ENCODE measurements at regions of chr21 and their contacts with region 1.

Region 1: GRCh38 chr21:33229784-33230544 is at the start of gene IFNAR2:
- DNase-seq: peak; percentile 84
- H3K4me3 ChIP-seq: peak within 1 kb of the TSS; percentile 99
- H3K27ac ChIP-seq: peak within 1 kb of the TSS; percentile 99
- H3K4me1 ChIP-seq: peaks cover 55% of the 10 kb centered on the region
- H3K27me3 ChIP-seq: no peaks in the 10 kb centered on the region
- CTCF ChIP-seq: no peak
- total RNA-seq, gene IFNAR2: 9.0 TPM

Region 2: DNA sequence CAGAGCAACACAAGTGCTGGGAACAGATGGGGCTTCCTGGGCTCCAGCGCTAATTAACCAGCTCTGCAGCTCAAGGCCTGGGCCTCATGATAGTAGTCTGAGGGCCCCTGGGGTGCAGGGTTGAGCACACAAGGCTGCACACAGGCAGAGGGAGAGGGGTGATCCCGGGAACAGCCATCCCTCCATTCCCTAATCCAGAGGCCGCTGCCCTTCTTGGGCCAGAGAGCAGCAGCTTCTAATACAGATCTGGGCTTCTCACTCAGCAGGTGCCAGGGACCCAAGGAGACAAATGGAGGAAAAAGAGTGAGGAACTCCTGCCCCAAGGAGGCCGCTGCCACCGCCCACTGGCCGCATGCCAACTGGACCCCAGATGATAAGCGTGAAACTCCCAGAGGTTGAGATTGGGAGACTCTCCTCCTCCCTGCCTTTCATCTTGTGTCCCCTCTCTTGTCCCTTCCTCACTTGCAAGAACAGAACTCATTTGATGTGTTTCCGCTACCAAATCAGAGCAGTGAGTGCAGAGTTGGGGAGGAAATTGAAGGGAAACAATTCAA is 58.3 kb before region 1 on chr21:
- intact Hi-C with region 1: no loop called
- DNase-seq: no peak
- H3K4me3 ChIP-seq: no peak overlapping the region
- H3K27ac ChIP-seq: no peak overlapping the region
- H3K4me1 ChIP-seq: no peaks in the 10 kb centered on the region
- H3K27me3 ChIP-seq: peaks cover 51% of the 10 kb centered on the region
- CTCF ChIP-seq: no peak

Region 3: DNA sequence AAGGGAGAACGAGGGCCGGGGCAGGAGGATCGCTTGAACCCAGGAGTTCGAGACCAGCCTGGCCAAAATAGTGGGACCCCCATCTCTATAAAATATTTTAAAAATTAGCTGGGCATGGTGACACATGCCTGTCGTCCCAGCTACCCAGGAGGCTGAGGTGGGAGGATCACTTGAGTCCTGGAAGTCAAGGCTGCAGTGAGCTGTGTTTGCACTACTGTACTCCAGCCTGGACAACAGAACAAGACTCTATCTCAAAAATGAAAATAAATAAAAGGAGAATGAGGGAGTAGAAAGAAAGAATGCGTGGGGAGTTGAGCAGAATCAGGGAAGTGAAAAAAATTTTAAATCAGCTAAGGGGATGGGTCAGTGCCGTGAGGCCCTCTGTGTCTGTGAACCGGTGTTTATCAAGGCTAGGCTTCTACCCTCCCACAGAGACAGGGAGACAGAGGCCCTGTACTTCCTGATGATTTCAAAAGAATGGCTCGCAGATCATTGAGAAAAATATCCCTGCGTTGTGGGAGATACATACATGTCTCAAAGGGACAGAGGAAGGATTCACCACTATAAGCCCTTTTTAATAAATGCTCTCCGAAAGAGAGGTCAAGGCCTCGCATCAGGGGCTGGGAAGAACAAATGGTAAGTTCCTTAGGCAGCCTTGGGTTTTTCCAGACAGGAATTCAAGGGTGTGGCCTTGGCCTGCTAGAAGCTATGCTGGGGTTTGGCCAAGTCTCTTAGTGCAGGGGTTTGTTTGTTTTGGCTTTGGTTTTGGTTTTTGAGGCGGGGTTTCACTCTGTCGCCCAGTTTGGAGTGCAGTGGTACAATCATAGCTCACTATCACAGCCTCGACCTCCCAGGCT is 56.9 kb after region 1 on chr21:
- intact Hi-C with region 1: loop called (anchors 10 kb)
- DNase-seq: peak; percentile 39
- H3K4me3 ChIP-seq: peak overlapping the region; percentile 22
- H3K27ac ChIP-seq: peak overlapping the region; percentile 82
- H3K4me1 ChIP-seq: peaks cover 41% of the 10 kb centered on the region
- H3K27me3 ChIP-seq: no peaks in the 10 kb centered on the region
- CTCF ChIP-seq: no peak

Region 4: GRCh38 chr21:33299181-33299752 is 69.3 kb after region 1 on chr21:
- intact Hi-C with region 1: no loop called
- DNase-seq: no peak
- H3K4me3 ChIP-seq: no peak overlapping the region
- H3K27ac ChIP-seq: peak overlapping the region; percentile 27
- H3K4me1 ChIP-seq: peaks cover 36% of the 10 kb centered on the region
- H3K27me3 ChIP-seq: no peaks in the 10 kb centered on the region
- CTCF ChIP-seq: no peak